ENCODE measurements at regions of chr2 and their contacts with region 1.

Region 1: GRCh38 chr2:71068218-71069035 is at the start of gene NAGK:
- DNase-seq: peak; percentile 98
- ATAC-seq: peak; percentile 97
- H3K4me3 ChIP-seq: peak within 1 kb of the TSS; percentile 39 to 56
- H3K27ac ChIP-seq: peak within 1 kb of the TSS in 1 of 2 donors; percentile 79
- H3K4me1 ChIP-seq: no peaks in the 10 kb centered on the region
- H3K27me3 ChIP-seq: no peaks in the 10 kb centered on the region
- total RNA-seq, gene NAGK: 80.1 to 141 TPM

Region 2: GRCh38 chr2:70994756-70995729 is 73.4 kb before region 1 on chr2 and contains the start of gene TEX261:
- intact Hi-C with region 1: loop called in 1 of 2 experiments (anchors 5 kb)
- DNase-seq: peak; percentile 93 to 97
- ATAC-seq: peak; percentile 98
- H3K4me3 ChIP-seq: peak within 1 kb of the TSS; percentile 84 to 86
- H3K27ac ChIP-seq: peak within 1 kb of the TSS in 1 of 2 donors; percentile 2
- H3K4me1 ChIP-seq: peaks cover 0 to 2% of the 10 kb centered on the region in 2 donors
- H3K27me3 ChIP-seq: no peaks in the 10 kb centered on the region
- total RNA-seq, gene TEX261: 51.0 to 58.1 TPM

Region 3: GRCh38 chr2:71049365-71050360 is 18.8 kb before region 1 on chr2:
- intact Hi-C with region 1: no loop called
- DNase-seq: no peak
- ATAC-seq: no peak
- H3K4me3 ChIP-seq: no peak overlapping the region
- H3K27ac ChIP-seq: no peak overlapping the region
- H3K4me1 ChIP-seq: no peaks in the 10 kb centered on the region
- H3K27me3 ChIP-seq: no peaks in the 10 kb centered on the region

Region 4: GRCh38 chr2:71130113-71130904 is 61.9 kb after region 1 on chr2 and contains the starts of genes MCEE and MPHOSPH10:
- intact Hi-C with region 1: loop called (anchors 1 to 2 kb)
- DNase-seq: peak; percentile 95 to 96
- ATAC-seq: peak; percentile 99
- H3K4me3 ChIP-seq: peak within 1 kb of the TSS; percentile 65 to 95
- H3K27ac ChIP-seq: peak within 1 kb of the TSS; percentile 2 to 68
- H3K4me1 ChIP-seq: peaks cover 0 to 6% of the 10 kb centered on the region in 2 donors
- H3K27me3 ChIP-seq: no peaks in the 10 kb centered on the region
- total RNA-seq, gene MCEE: 16.4 to 25.6 TPM
- total RNA-seq, gene MPHOSPH10: 28.9 to 29.7 TPM

Measured in aorta (tissue), 5 donors.